ENCODE measurements at regions of chr15 and their contacts with region 1.

Region 1: DNA sequence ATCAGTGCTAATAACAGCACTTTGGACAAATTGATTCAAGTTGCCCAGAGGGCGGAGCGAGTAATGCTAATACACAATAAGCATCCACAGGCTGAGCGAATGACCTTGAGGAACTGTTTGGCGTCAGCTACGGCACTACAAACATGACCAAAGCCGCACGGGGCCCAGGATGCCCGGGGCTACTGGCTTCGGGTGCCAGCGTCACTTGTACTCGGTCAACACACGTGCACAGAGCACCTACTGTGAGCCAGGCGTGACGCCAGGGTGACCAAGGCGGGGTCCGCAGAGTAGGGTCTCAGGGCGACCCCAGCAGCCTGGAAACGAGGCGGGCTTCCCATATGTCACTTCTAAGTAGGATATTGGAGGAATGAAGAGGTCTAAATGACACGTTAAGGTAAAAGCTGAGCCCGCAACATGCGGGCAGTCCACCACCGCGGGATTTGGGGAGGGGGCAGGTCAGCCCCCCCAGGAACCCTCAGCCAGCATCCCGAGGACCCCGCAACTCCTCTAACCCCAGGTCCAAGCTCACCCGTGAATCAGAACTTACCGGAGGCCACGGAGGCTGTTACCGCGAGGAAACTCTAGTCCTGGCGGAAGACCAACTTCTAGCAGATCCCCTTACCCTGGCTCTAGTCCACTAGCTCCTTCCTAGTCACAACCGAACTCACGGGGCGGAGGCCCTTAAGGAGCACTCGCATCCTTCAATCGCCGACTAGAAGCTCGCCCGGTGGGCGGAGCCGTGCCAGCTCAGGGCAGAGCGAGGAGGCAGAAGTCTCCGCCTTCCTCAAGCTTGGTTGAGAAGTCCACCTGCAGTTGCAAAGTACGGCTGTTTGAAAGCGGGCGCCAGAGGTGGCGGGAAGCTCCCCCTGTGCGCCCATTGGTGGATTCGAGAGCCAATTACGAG is at the start of gene CEP152:
- DNase-seq: peak; percentile 100
- H3K4me3 ChIP-seq: peak within 1 kb of the TSS; percentile 84 to 93 (median 88)
- H3K27ac ChIP-seq: peak within 1 kb of the TSS; percentile 89
- H3K4me1 ChIP-seq: peaks cover 12% of the 10 kb centered on the region
- H3K27me3 ChIP-seq: no peaks in the 10 kb centered on the region
- CTCF ChIP-seq: no peak
- total RNA-seq, gene CEP152: 2.5 to 9.2 TPM

Region 2: GRCh38 chr15:48352474-48353072 is 458.1 kb before region 1 on chr15:
- CTCF ChIA-PET with region 1: no interaction called
- dilution Hi-C with region 1: no loop called
- in situ Hi-C with region 1: loop called (anchors 25 kb)
- intact Hi-C with region 1: no loop called
- DNase-seq: peak; percentile 47
- H3K4me3 ChIP-seq: no peak overlapping the region
- H3K27ac ChIP-seq: no peak overlapping the region
- H3K4me1 ChIP-seq: no peaks in the 10 kb centered on the region
- H3K27me3 ChIP-seq: no peaks in the 10 kb centered on the region
- CTCF ChIP-seq: peak; percentile 78 to 84

Region 3: DNA sequence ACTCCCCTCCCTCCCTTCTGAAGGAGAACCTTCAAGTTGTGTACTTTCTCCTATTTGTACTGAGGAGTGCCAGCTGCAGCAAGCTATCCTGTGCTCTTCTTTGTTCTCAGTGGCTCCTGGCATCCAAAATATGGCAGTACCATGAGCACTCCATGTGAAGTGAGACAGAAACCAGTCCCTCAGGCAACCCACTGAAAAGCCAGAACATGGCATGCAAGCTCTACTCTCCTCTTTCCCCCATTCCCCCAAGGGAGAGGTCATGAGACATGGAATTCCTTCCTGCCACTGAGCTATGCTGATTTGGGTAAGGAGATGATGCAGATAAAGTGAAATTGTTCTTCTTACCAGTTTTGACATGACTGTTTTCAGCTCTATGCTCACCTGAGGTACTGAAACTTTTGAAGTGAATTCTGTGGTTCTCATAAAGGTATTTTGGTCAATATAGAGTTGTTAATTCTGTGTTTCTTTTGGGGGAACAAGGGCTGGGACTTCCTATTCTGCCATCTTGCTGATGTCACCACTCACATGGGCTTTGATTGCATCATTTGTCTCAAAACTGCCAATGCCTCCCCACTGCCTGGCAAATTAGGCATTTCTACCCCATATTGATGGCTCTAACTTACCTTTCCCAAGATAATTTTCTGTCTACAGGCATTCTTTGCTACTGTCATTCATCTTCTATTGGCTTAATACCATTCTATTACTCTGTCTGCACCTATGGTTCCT is 23.0 kb after region 1 on chr15:
- CTCF ChIA-PET with region 1: no interaction called
- dilution Hi-C with region 1: no loop called
- in situ Hi-C with region 1: no loop called
- intact Hi-C with region 1: no loop called
- DNase-seq: no peak
- H3K4me3 ChIP-seq: no peak overlapping the region
- H3K27ac ChIP-seq: no peak overlapping the region
- H3K4me1 ChIP-seq: no peaks in the 10 kb centered on the region
- H3K27me3 ChIP-seq: no peaks in the 10 kb centered on the region
- CTCF ChIP-seq: no peak

Region 4: GRCh38 chr15:48855501-48856440 is 45.1 kb after region 1 on chr15:
- CTCF ChIA-PET with region 1: interaction called, 4 read pairs
- dilution Hi-C with region 1: no loop called
- in situ Hi-C with region 1: no loop called
- intact Hi-C with region 1: loop called (anchors 5 kb)
- DNase-seq: no peak
- H3K4me3 ChIP-seq: no peak overlapping the region
- H3K27ac ChIP-seq: no peak overlapping the region
- H3K4me1 ChIP-seq: peaks cover 5% of the 10 kb centered on the region
- H3K27me3 ChIP-seq: no peaks in the 10 kb centered on the region
- CTCF ChIP-seq: peak; percentile 47 to 70